IMR-90 (cell line): ENCODE measurements at regions of chr10 and their contacts with region 1.

Region 1: GRCh38 chr10:48981310-48981907 is 41.8 kb upstream of the LRRC18 start:
- DNase-seq: peak; percentile 41
- ATAC-seq: peak; percentile 95
- H3K4me3 ChIP-seq: no peak overlapping the region
- H3K27ac ChIP-seq: no peak overlapping the region
- H3K4me1 ChIP-seq: no peaks in the 10 kb centered on the region
- H3K27me3 ChIP-seq: peaks cover 18% of the 10 kb centered on the region
- CTCF ChIP-seq: peak; percentile 67
- POLR2A ChIP-seq: no peak
- RAD21 ChIP-seq: peak; percentile 79

Region 2: DNA sequence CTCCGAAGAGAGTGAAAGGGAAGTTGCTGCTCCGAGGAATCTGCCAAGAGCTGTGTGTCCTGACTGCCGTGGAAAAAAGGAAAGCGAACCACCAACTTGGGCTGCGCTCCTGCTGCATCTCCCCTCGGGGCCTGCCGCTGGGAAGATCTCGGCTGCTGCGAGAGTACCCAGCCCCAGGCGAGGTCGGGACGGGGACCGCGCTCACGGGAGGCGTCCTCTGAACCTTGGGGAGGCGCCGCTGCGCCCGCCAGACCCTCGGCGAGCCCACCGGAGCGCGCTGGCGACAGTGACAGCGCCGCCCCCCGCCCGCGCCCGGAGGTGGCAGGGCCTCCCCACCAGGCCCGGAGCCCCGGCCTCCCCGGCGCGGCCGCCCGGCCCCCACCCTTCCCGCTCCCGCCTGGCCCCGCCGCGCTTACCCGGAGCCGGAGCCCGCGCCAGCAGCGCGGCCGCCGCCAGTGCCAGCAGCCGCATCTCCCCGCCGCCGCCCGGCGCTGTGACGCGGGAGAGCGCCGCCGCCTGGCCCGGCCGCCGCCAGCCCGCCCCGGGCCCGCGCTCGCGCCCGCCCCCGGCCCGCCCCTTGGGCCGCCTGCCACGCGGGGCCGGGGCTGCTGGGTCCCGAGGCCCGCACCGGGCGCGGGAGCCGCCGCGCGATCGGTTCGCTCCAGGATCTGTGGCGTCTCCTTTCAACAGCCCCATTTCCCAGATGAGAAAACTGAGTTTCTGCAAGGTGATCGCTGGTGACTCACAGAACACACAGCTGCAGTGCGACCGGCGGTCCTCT is 133.8 kb after region 1 on chr10 and contains the start of gene VSTM4:
- CTCF ChIA-PET with region 1: interaction called, 3 read pairs
- POLR2A ChIA-PET with region 1: no interaction called
- dilution Hi-C with region 1: no loop called
- in situ Hi-C with region 1: no loop called
- intact Hi-C with region 1: loop called (anchors 2 kb)
- DNase-seq: peak; percentile 59
- ATAC-seq: peak; percentile 85
- H3K4me3 ChIP-seq: peak within 1 kb of the TSS; percentile 66
- H3K27ac ChIP-seq: peak within 1 kb of the TSS; percentile 86
- H3K4me1 ChIP-seq: peaks cover 17% of the 10 kb centered on the region; the same call in 1 of the 2 replicates
- H3K27me3 ChIP-seq: no peaks in the 10 kb centered on the region; the same call in 1 of the 2 replicates
- CTCF ChIP-seq: no peak
- POLR2A ChIP-seq: peak; percentile 31; the same call in 1 of the 2 replicates
- RAD21 ChIP-seq: no peak; the same call in 1 of the 2 replicates
- total RNA-seq, gene VSTM4: 2.5 and 2.9 TPM in 2 replicates

Region 3: DNA sequence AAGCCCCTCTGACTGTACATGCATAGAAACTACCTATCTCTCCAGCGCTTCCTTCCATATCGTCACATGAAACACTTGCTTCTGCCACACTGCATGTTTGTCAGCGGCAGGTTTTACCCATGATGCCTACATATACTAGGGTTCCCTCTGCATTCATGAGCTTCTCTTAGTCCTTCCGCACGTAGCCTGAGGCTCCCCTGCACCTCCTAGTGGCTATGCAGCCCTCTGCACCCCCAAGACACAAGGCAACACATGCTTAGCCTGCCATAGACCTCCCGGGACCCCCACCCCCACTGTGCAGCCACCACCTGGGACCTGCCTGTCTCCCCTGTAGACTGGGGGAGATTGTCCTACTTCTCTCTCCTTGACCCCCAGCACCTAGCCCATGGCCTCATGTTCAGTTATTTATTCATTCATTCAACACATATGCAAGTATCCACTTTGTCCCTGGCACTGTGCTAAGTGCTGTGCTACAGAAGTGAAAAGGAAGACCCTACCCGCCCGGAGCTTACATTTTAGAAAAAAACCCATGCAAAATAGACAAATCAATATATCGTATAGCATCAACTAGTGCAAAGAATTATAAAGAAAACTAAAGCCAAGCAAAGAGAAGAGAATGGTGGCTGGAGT is 183.3 kb after region 1 on chr10:
- CTCF ChIA-PET with region 1: no interaction called
- POLR2A ChIA-PET with region 1: no interaction called
- dilution Hi-C with region 1: no loop called
- in situ Hi-C with region 1: no loop called
- intact Hi-C with region 1: loop called (anchors 1 kb)
- DNase-seq: peak; percentile 35
- ATAC-seq: 0 out of 2 replicates have a peak, but pooled peaks have one; percentile 31
- H3K4me3 ChIP-seq: no peak overlapping the region
- H3K27ac ChIP-seq: no peak overlapping the region
- H3K4me1 ChIP-seq: peaks cover 13% of the 10 kb centered on the region
- H3K27me3 ChIP-seq: no peaks in the 10 kb centered on the region
- CTCF ChIP-seq: peak; percentile 47
- POLR2A ChIP-seq: no peak
- RAD21 ChIP-seq: peak; percentile 56

Region 4: GRCh38 chr10:49407552-49408137 is 426.2 kb after region 1 on chr10:
- CTCF ChIA-PET with region 1: no interaction called
- POLR2A ChIA-PET with region 1: no interaction called
- dilution Hi-C with region 1: no loop called
- in situ Hi-C with region 1: no loop called
- intact Hi-C with region 1: loop called (anchors 1 kb)
- DNase-seq: peak; percentile 68
- ATAC-seq: peak; percentile 97
- H3K4me3 ChIP-seq: no peak overlapping the region
- H3K27ac ChIP-seq: no peak overlapping the region
- H3K4me1 ChIP-seq: no peaks in the 10 kb centered on the region
- H3K27me3 ChIP-seq: peaks cover 51% of the 10 kb centered on the region
- CTCF ChIP-seq: peak; percentile 83
- POLR2A ChIP-seq: no peak
- RAD21 ChIP-seq: peak; percentile 74

Region 5: GRCh38 chr10:49512121-49512809 is 530.9 kb after region 1 on chr10:
- CTCF ChIA-PET with region 1: interaction called, 4 read pairs
- POLR2A ChIA-PET with region 1: no interaction called
- dilution Hi-C with region 1: no loop called
- in situ Hi-C with region 1: loop called (anchors 5 kb)
- intact Hi-C with region 1: loop called (anchors 1 kb)
- DNase-seq: peak; percentile 43
- ATAC-seq: peak; percentile 81
- H3K4me3 ChIP-seq: no peak overlapping the region
- H3K27ac ChIP-seq: no peak overlapping the region
- H3K4me1 ChIP-seq: peaks cover 2% of the 10 kb centered on the region; the same call in 1 of the 2 replicates
- H3K27me3 ChIP-seq: no peaks in the 10 kb centered on the region
- CTCF ChIP-seq: peak; percentile 70
- POLR2A ChIP-seq: no peak
- RAD21 ChIP-seq: peak; percentile 82